ENCODE measurements at regions of chr19 and their contacts with region 1.

Region 1: GRCh38 chr19:44723952-44724319 is 24.6 kb upstream of the BCL3 start:
- DNase-seq: peak; percentile 96
- ATAC-seq: peak; percentile 77 to 83
- H3K4me3 ChIP-seq: peak overlapping the region; percentile 38
- H3K27ac ChIP-seq: peak overlapping the region; percentile 97
- H3K4me1 ChIP-seq: peaks cover 87% of the 10 kb centered on the region
- CTCF ChIP-seq: peak; percentile 99
- EP300 ChIP-seq: no peak
- POLR2A ChIP-seq: peak; percentile 40; the same call in 1 of the 2 replicates
- RAD21 ChIP-seq: peak; percentile 100

Region 2: GRCh38 chr19:44570984-44571684 is 152.8 kb before region 1 on chr19:
- CTCF ChIA-PET with region 1: interaction called, 26 read pairs
- POLR2A ChIA-PET with region 1: no interaction called
- DNase-seq: peak; percentile 82 to 86
- ATAC-seq: peak; percentile 87 to 95
- H3K4me3 ChIP-seq: no peak overlapping the region
- H3K27ac ChIP-seq: peak overlapping the region in 1 of 2 experiments; percentile 57; a peak in 2 of 6 replicates
- H3K4me1 ChIP-seq: peaks cover 8% of the 10 kb centered on the region
- CTCF ChIP-seq: peak; percentile 98
- EP300 ChIP-seq: no peak
- POLR2A ChIP-seq: no peak
- RAD21 ChIP-seq: peak; percentile 95 to 96

Region 3: GRCh38 chr19:44607049-44607448 is 116.9 kb before region 1 on chr19:
- CTCF ChIA-PET with region 1: interaction called, 12 read pairs
- POLR2A ChIA-PET with region 1: no interaction called
- DNase-seq: peak in 1 of 2 experiments; percentile 67
- ATAC-seq: peak in 1 of 2 experiments; percentile 53; a peak in 4 of 6 replicates
- H3K4me3 ChIP-seq: no peak overlapping the region
- H3K27ac ChIP-seq: peak overlapping the region; percentile 46; a peak in 5 of 6 replicates
- H3K4me1 ChIP-seq: peaks cover 46% of the 10 kb centered on the region
- CTCF ChIP-seq: no peak
- EP300 ChIP-seq: no peak
- POLR2A ChIP-seq: no peak
- RAD21 ChIP-seq: no peak

Region 4: GRCh38 chr19:44712864-44713515 is 10.9 kb before region 1 on chr19:
- CTCF ChIA-PET with region 1: interaction called, 694 read pairs
- POLR2A ChIA-PET with region 1: interaction called, 3 read pairs
- DNase-seq: peak in 1 of 2 experiments; percentile 64
- ATAC-seq: peak; percentile 66 to 70; a peak in 5 of 6 replicates
- H3K4me3 ChIP-seq: no peak overlapping the region
- H3K27ac ChIP-seq: peak overlapping the region in 1 of 2 experiments; percentile 32; a peak in 3 of 6 replicates
- H3K4me1 ChIP-seq: peaks cover 15% of the 10 kb centered on the region
- CTCF ChIP-seq: no peak
- EP300 ChIP-seq: no peak
- POLR2A ChIP-seq: no peak
- RAD21 ChIP-seq: no peak

Region 5: DNA sequence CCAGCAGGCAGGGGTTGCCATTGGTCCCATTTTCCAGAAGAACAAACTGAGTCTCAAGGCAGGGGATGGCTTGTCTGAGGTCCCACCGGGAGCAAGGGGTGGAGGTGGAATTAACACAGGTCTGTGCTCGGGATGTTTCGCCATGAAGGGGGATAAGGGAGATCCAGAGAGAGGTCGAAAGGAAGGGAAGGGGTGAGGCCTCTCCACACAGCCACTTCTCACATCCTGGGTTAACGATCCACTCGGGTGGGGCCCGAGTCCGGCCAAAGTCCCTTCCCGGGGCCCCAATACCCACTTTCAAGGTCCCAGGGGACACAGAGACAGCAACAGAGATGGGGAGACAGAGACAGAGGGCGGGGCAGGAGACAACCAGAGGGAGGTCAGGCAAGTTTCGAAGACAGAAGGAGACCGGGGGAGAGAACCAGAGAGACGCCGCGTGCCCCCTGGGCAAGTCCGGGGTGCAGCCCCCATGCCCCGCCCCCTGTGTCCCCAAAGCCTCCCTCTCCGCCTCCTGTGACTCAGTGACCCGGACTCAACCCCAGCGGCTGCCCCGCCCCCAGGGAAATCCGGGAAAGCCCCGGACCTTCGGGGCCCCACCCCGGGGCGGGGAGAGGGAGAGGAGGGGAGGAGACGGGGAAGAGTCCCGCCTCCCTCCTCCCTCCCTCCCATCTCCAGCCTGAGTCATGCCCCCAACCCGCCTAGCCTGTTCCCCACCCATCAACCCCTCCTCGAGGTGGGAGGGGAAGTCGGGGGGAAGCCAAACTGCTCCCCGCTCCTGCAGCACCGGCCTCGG is 23.2 kb after region 1 on chr19:
- CTCF ChIA-PET with region 1: interaction called, 1,899 read pairs
- POLR2A ChIA-PET with region 1: interaction called, 53 read pairs
- DNase-seq: peak; percentile 92 to 98
- ATAC-seq: peak; percentile 55 to 71
- H3K4me3 ChIP-seq: peak overlapping the region; percentile 95
- H3K27ac ChIP-seq: peak overlapping the region; percentile 92 to 99
- H3K4me1 ChIP-seq: peaks cover 75% of the 10 kb centered on the region
- CTCF ChIP-seq: no peak
- EP300 ChIP-seq: peak; percentile 51 to 81; a peak in 3 of 5 replicates
- POLR2A ChIP-seq: peak; percentile 62
- RAD21 ChIP-seq: peak in 1 of 2 experiments; percentile 26; a peak in 3 of 5 replicates

Region 6: GRCh38 chr19:44764975-44765948 is 41.3 kb after region 1 on chr19:
- CTCF ChIA-PET with region 1: interaction called, 1,899 read pairs
- POLR2A ChIA-PET with region 1: interaction called, 49 read pairs
- DNase-seq: peak in 1 of 2 experiments; percentile 89
- ATAC-seq: peak; percentile 10 to 51; a peak in 3 of 6 replicates
- H3K4me3 ChIP-seq: no peak overlapping the region
- H3K27ac ChIP-seq: peak overlapping the region; percentile 31 to 88
- H3K4me1 ChIP-seq: peaks cover 40% of the 10 kb centered on the region
- CTCF ChIP-seq: no peak
- EP300 ChIP-seq: peak in 1 of 2 experiments; percentile 24; a peak in 2 of 5 replicates
- POLR2A ChIP-seq: no peak
- RAD21 ChIP-seq: no peak

Region 7: DNA sequence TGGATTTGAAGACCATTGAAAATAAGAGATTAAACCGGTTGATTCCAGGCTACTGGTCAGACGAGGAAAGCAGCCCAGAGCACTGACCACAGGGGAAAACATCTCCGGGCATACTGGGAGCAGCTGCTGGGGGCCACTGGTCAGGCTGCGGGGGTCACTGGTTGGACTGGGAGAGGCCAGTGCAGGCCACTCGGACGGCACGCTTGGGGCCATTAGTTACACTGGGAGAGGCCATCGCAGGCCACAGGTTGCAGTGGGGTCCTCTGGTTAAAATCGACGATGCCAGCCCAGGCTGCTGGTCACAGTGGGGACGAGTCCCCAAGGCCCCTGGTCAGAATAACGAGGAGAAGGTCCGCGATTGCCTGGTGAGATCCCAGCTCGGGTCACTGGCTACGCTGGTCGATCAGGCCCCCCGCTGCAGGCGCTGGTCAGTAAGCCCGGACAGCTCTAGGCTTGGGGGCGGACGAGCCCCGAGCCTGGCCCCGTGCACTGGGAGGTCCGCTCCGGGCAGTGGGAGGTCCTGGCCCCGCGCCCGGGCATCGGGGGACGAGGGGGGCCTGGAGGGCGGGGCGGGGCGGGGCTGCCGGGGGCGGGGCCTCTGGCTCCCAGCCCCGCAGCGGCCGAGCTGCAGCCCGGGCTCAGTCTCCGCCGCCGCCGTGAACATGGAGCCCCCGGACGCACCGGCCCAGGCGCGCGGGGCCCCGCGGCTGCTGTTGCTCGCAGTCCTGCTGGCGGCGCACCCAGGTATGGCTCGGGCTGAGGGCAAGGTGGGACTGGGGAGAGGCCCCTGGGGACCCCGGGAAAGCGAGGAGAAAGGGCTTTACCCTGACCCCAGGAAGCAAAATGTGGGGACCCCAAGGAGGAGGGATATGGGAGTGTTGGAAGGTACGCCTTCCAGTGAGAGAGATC is 84.8 kb after region 1 on chr19 and contains the start of gene BCAM:
- CTCF ChIA-PET with region 1: interaction called, 43 read pairs
- POLR2A ChIA-PET with region 1: no interaction called
- DNase-seq: peak; percentile 53 to 93
- ATAC-seq: peak; percentile 52 to 72
- H3K4me3 ChIP-seq: peak within 1 kb of the TSS; percentile 69
- H3K27ac ChIP-seq: peak within 1 kb of the TSS; percentile 88 to 89
- H3K4me1 ChIP-seq: peaks cover 35% of the 10 kb centered on the region
- CTCF ChIP-seq: no peak
- EP300 ChIP-seq: no peak
- POLR2A ChIP-seq: peak; percentile 76
- RAD21 ChIP-seq: no peak
- polyA plus RNA-seq, gene BCAM: 15.2 and 18.4 TPM in 2 replicates

Region 8: GRCh38 chr19:44908836-44909201 is 184.9 kb after region 1 on chr19:
- CTCF ChIA-PET with region 1: no interaction called
- POLR2A ChIA-PET with region 1: no interaction called
- DNase-seq: no peak
- ATAC-seq: no peak
- H3K4me3 ChIP-seq: no peak overlapping the region
- H3K27ac ChIP-seq: no peak overlapping the region
- H3K4me1 ChIP-seq: peaks cover 49% of the 10 kb centered on the region
- CTCF ChIP-seq: no peak
- EP300 ChIP-seq: no peak
- POLR2A ChIP-seq: no peak
- RAD21 ChIP-seq: no peak

Measured in A549 (cell line).